ENCODE measurements at regions of chr17 and their contacts with region 1.

Region 1: GRCh38 chr17:4199818-4200402 is 56.9 kb downstream of the CYB5D2 start:
- DNase-seq: no peak
- ATAC-seq: peak; percentile 55
- H3K4me3 Mint-ChIP-seq: no peak overlapping the region
- H3K27ac Mint-ChIP-seq: no peak overlapping the region
- H3K4me1 Mint-ChIP-seq: peaks cover 1% of the 10 kb centered on the region
- H3K27me3 Mint-ChIP-seq: no peaks in the 10 kb centered on the region

Region 2: DNA sequence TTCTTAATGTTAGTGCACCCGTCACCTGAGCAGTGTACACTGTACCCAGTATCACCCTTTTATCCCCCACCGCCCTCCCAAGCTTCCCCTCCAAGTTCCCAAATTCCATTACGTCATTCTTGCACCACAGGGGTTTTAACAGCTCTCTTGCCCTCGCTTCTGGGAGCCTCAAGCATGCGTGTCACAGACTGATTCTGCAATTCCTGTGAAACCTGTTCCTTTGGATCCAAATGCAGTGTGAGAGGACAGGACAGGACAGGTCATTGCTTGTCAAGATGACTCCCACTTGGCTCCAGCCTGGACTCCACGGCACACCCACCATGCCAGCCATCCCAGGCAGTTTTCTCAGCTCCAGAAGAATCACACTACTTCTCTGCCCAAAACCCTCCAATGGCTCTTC is 12.8 kb before region 1 on chr17:
- CTCF ChIA-PET with region 1: interaction called, 12 read pairs
- DNase-seq: no peak
- ATAC-seq: no peak
- H3K4me3 Mint-ChIP-seq: no peak overlapping the region
- H3K27ac Mint-ChIP-seq: no peak overlapping the region
- H3K4me1 Mint-ChIP-seq: no peaks in the 10 kb centered on the region
- H3K27me3 Mint-ChIP-seq: no peaks in the 10 kb centered on the region

Region 3: DNA sequence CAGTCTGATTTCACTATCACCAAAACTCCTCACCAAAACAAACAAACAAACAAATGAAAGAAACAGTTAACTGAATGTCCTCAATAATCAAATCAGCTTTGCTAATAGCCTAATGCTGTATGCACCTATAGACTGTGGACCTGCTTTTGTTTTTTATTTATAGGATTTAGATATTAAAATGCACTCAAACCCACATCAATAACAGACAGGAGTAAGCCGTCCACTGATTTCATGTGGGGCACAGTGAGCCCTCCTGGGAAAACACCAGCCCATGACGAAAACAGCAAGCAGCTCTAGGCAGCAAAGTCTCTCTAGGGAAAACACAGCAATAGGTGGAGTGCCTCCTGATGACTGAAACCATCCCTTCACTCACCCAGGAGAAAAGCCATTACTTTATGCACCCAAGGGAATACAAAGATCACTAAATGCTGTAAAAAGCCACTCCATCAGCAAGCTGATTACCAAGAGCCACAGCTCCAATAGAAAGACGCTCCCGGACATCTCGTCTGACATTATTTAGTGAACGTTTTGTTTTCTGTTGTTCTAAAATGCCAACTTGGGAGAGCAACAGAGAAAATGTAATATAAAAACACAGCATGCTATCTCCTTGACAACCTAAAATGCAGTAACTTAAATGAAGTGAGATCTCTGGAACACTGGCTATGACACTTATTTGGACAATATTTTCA is 16.1 kb after region 1 on chr17:
- CTCF ChIA-PET with region 1: interaction called, 35 read pairs
- DNase-seq: no peak
- ATAC-seq: no peak
- H3K4me3 Mint-ChIP-seq: no peak overlapping the region
- H3K27ac Mint-ChIP-seq: peak overlapping the region; percentile 81
- H3K4me1 Mint-ChIP-seq: peaks cover 17% of the 10 kb centered on the region
- H3K27me3 Mint-ChIP-seq: no peaks in the 10 kb centered on the region

Region 4: GRCh38 chr17:4249452-4250029 is 49.6 kb after region 1 on chr17:
- CTCF ChIA-PET with region 1: interaction called, 10 read pairs
- DNase-seq: no peak
- ATAC-seq: peak; percentile 36
- H3K4me3 Mint-ChIP-seq: no peak overlapping the region
- H3K27ac Mint-ChIP-seq: peak overlapping the region; percentile 7
- H3K4me1 Mint-ChIP-seq: peaks cover 38% of the 10 kb centered on the region
- H3K27me3 Mint-ChIP-seq: no peaks in the 10 kb centered on the region

Region 5: DNA sequence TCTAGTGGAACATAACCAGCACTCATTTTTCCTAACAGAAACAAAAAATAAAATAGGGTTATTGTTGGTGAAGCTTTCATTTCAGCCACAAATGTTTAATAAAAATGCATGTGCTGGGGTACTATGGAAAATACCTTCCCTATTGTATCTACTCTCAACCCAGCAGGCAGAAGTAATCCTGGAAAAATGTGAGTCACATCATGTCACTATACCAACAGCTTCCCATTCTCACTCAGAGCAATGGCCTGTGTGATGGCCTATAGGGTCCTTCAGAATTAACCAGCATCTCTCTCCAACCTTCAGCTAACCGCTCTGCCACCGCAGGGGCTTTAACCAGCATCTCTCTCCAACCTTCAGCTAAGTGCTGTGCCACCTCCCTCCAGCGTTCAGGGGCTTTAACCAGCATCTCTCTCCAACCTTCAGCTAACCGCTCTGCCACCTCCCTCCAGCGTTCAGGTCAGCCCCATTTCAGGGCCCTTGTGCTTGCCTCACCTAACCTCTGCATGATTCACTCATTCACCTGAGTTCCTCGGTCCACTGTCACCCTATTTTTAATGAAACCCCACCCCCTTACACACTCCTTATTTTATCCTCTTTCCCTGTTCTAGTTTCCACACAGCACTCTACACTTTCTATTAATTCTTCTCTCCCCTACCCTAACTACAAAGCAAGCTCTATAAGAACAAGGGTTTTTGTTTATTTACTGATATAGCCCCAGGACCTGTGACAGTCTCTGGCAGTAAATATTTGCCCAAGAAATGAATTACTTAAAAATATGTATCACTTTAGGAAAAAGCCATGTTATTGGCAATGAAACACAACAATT is 132.6 kb after region 1 on chr17:
- CTCF ChIA-PET with region 1: interaction called, 10 read pairs
- DNase-seq: no peak
- ATAC-seq: no peak
- H3K4me3 Mint-ChIP-seq: no peak overlapping the region
- H3K27ac Mint-ChIP-seq: no peak overlapping the region
- H3K4me1 Mint-ChIP-seq: peaks cover 34% of the 10 kb centered on the region
- H3K27me3 Mint-ChIP-seq: no peaks in the 10 kb centered on the region

Region 6: DNA sequence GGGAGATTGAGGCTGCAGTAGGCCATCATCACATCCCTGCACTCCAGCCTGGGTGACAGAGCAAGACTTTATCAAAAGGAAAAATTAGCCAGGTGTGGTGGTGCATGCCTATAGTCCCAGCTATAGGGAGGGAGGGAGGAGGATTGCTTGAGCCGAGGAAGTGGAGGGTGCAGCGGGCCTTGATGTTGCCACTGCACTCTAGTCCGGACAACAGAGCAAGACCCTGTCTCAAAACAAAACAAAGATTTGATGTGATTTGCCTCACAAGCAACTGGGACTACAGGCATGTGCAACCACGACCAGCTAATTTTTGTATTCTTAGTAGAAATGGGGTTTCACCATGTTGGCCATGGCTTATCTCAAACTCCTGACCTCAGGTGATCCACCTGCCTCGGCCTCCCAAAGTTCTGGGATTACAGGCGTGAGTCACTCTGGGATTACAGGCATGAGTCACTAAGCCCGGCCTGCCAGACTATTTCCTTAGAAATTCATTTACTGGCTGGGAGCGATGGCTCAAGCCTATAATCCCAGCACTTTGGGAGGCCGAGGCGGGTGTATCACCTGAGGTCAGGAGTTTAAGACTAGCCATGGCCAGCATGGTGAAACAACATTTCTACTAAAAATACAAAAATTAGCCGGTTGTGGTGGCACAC is 155.1 kb after region 1 on chr17:
- CTCF ChIA-PET with region 1: no interaction called
- DNase-seq: no peak
- ATAC-seq: no peak
- H3K4me3 Mint-ChIP-seq: no peak overlapping the region
- H3K27ac Mint-ChIP-seq: no peak overlapping the region
- H3K4me1 Mint-ChIP-seq: peaks cover 26% of the 10 kb centered on the region
- H3K27me3 Mint-ChIP-seq: no peaks in the 10 kb centered on the region

Region 7: DNA sequence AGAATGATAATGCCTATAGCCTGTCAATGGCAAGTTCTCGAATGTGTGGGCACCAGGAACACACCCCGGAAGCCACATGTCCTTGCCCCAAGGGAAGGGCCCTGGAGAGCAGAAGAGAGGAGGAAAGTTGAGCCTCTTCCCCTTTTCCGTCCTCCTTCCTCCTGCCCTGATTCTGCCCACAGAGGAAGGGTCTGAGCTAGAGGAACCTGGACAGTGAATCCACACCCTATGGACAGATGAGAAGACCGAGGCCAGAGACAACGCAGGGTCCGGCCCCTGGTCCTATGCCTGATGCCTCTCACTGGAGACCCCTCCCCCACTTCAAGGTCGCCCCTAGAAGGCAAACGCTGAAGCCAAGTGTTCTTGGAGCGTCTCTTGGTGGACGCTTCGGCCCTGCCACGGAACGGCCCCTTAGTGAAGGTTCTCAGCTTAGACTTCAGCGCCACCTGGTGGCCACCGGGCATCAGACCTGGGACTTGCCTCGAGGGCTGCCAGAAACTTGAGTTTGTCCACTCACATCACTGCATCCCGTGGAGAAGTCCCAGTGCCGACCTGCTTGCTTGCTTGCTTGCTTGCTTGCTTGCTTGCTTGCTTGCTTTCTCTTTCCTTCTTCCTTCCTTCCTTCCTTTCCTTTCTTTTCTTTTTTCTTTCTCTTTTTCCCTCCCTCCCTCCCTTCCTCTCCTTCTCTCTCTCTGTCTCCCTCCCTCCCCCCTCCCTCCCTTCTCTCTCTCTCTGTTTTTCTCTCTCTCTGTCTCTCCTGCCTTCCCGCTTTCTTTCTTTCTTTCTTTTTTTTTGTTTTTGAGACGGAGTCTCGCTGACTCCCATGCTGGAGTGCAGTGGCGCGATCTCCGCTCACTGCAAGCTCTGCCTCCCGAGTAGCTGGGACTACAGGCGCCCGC is 213.3 kb after region 1 on chr17:
- CTCF ChIA-PET with region 1: interaction called, 32 read pairs
- DNase-seq: peak; percentile 94
- ATAC-seq: peak; percentile 100
- H3K4me3 Mint-ChIP-seq: peak overlapping the region; percentile 59
- H3K27ac Mint-ChIP-seq: peak overlapping the region; percentile 74
- H3K4me1 Mint-ChIP-seq: peaks cover 6% of the 10 kb centered on the region
- H3K27me3 Mint-ChIP-seq: no peaks in the 10 kb centered on the region